Ovary (tissue), 10 donors: ENCODE measurements at regions of chr11 and their contacts with region 1.

Region 1: GRCh38 chr11:73661035-73661628 is 14.8 kb downstream of the PLEKHB1 start:
- DNase-seq: peak; percentile 85 to 95 (median 92)
- H3K4me3 ChIP-seq: peak overlapping the region; percentile 21
- H3K27ac ChIP-seq: no peak overlapping the region
- H3K4me1 ChIP-seq: peaks cover 5% of the 10 kb centered on the region
- H3K27me3 ChIP-seq: no peaks in the 10 kb centered on the region
- CTCF ChIP-seq: peak; percentile 91 to 99 (median 98)
- EP300 ChIP-seq: no peak
- POLR2A ChIP-seq: no peak

Region 2: DNA sequence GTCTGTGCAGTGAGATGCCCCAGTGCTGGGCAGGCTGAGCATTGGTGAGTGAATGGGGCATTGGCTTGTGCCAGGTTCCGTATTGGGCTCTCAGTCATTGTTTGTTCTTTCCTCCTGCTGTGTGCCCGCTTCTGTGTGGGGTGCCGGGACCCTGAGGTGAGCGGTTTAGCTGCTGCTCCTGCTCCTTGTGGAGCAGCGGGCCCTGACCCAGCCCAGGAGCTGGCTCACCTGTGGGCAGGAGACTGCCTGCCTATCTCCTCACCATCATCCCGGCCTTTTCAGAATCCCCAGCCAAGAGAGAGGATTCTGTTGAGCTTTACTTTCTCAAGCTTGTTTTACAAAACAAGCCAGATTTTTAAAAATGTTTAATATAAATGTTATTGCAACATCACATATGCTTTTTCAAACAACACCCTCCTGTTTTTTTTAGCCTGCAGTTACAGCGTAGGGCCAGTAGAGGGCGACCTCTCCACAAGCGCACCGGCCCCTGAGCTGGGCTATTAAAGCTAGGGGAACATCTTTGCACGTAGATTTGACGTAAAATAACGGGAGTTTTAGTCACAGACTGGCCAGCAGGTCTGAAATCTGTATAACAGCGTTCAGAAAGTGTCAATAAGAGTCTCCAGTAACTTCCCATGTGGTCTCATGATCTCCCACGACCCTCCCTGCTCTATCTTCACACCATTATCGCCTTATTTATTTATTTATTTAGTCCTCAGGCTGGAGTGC is 310.1 kb before region 1 on chr11:
- intact Hi-C with region 1: loop called in 1 of 4 experiments (anchors 5 kb)
- DNase-seq: peak in 2 of 5 donors; percentile 64 to 70
- H3K4me3 ChIP-seq: no peak overlapping the region
- H3K27ac ChIP-seq: no peak overlapping the region
- H3K4me1 ChIP-seq: no peaks in the 10 kb centered on the region
- H3K27me3 ChIP-seq: no peaks in the 10 kb centered on the region
- CTCF ChIP-seq: peak; percentile 84 to 90 (median 86)
- EP300 ChIP-seq: no peak
- POLR2A ChIP-seq: no peak

Region 3: DNA sequence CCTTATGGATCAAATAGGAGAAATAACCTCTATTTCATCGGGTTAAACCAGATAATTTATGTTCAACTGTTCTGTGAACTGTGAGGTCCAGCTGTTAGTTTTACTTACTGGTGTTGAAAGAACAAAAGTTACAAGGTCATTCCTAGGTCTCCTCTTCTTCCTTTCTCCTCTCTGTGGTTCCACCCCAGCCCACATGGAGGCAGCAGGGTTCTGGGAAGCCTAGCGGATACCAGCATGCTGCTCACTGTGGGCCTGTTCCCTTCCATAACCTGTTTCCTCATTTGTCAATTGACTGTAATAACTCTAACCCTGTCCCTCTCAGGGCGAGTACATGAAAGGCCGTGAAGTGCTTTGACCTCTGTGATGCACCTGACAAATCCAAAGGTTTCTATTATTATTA is 257.1 kb before region 1 on chr11:
- intact Hi-C with region 1: loop called in 2 of 4 experiments (anchors 2 to 5 kb)
- DNase-seq: peak; percentile 64 to 86 (median 71)
- H3K4me3 ChIP-seq: no peak overlapping the region
- H3K27ac ChIP-seq: no peak overlapping the region
- H3K4me1 ChIP-seq: no peaks in the 10 kb centered on the region
- H3K27me3 ChIP-seq: no peaks in the 10 kb centered on the region
- CTCF ChIP-seq: peak; percentile 35 to 75 (median 55)
- EP300 ChIP-seq: no peak
- POLR2A ChIP-seq: no peak

Region 4: GRCh38 chr11:73625696-73626318 is 35.3 kb before region 1 on chr11:
- intact Hi-C with region 1: loop called in 1 of 4 experiments (anchors 5 kb)
- DNase-seq: peak; percentile 56 to 72 (median 66)
- H3K4me3 ChIP-seq: no peak overlapping the region
- H3K27ac ChIP-seq: no peak overlapping the region
- H3K4me1 ChIP-seq: no peaks in the 10 kb centered on the region
- H3K27me3 ChIP-seq: no peaks in the 10 kb centered on the region
- CTCF ChIP-seq: peak; percentile 55 to 72 (median 63)
- EP300 ChIP-seq: no peak
- POLR2A ChIP-seq: no peak